AG04449 (cell line): ENCODE measurements at regions of chr7 and their contacts with region 1.

Region 1: DNA sequence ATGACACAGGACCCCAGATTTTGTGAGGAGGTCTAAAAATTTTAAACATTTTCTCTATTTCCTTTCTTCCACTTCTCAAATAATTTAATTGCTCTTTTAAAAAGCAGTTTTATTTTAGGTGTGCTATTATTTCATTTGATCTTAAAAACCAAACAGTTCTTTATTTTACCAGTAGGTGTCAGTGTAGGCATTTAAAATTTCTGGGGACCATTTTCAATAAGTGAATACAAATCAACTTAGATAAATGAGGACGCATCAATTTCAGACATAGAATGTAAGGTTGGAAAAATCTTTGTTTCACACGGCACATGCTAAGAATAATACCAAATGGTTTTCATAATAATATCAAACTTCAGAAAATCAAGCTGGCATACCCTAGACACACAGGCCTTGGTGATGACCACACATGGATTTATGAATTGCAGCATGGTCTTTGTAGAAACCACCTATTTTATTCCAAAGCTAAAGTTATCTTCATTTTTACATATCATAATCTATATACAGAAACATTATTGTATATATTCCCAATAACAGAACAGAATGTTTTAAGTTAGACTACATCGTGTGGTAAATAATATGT is 127.6 kb upstream of the SLC26A5 start:
- DNase-seq: no peak
- H3K4me3 ChIP-seq: no peak overlapping the region
- CTCF ChIP-seq: no peak

Region 2: DNA sequence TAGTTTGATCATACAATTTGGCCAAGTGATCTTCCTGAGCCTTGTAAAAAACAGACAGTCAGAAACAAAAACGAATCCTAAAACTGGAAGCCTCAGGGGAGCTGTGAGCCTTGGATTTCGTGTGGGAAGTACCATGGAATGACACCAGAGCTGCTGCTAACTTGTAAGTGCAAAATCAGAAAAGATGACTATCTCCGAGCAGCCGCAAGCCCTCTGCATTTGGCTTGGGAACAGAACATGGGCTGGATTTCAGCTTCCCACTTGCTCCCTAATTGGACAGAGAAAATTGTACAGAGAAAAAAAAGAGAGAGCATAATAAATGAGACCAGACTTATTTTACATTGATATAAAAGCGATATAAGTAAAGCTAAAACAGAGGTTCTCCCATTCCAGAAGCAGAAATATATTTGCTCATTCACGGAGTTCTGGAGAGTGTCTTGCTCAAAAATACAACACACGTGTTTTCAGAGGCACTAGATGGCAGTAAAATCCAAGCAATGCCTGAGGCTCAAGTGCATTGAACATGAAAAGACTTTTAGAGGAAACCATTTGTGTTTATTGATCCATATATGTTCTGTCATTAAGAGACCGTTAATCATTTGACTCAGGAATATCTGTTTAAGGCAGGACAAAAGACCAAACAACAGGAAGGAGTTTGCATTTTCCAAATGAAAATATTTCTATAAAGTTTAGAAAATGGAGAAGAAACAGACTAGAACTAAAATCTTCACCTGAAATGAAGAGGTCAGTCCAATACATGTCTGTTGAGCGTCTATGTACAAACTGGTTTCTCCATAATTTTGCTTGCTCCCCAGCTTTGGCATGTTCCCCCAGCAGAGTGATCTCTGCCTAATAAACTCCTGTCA is 49.3 kb before region 1 on chr7:
- CTCF ChIA-PET with region 1: interaction called, 23 read pairs
- POLR2A ChIA-PET with region 1: no interaction called
- DNase-seq: peak; percentile 9
- H3K4me3 ChIP-seq: no peak overlapping the region
- CTCF ChIP-seq: peak; percentile 52

Region 3: GRCh38 chr7:103593691-103594090 is 20.1 kb after region 1 on chr7:
- CTCF ChIA-PET with region 1: interaction called, 27 read pairs
- POLR2A ChIA-PET with region 1: no interaction called
- DNase-seq: peak; percentile 7
- H3K4me3 ChIP-seq: no peak overlapping the region
- CTCF ChIP-seq: no peak

Region 4: DNA sequence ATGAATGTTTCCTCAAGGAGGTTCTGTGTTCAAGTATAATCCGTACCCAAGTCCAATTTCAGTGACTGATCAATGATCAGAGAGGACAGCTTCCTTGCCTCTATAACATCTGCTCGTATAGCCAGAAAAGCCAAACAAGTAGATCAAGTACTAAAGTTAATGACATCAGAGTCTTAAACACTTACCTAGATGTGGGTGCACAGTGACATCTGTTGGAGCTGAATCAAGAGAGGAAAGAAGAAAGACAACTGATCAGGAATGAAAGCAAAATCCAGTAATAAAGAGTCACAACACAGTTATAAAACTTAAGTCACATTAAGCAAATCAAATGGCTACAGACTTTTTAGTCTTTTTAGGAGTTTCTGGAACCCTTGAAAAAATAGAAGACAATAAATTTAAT is 179.4 kb after region 1 on chr7:
- CTCF ChIA-PET with region 1: interaction called, 65 read pairs
- POLR2A ChIA-PET with region 1: no interaction called
- DNase-seq: no peak
- H3K4me3 ChIP-seq: no peak overlapping the region
- CTCF ChIP-seq: peak; percentile 11

Region 5: GRCh38 chr7:104156842-104157277 is 583.3 kb after region 1 on chr7:
- CTCF ChIA-PET with region 1: interaction called, 31 read pairs
- POLR2A ChIA-PET with region 1: no interaction called
- DNase-seq: peak; percentile 12
- H3K4me3 ChIP-seq: no peak overlapping the region
- CTCF ChIP-seq: peak; percentile 43

Region 6: GRCh38 chr7:104267701-104268368 is 694.3 kb after region 1 on chr7:
- CTCF ChIA-PET with region 1: interaction called, 10 read pairs
- POLR2A ChIA-PET with region 1: no interaction called
- DNase-seq: no peak
- H3K4me3 ChIP-seq: no peak overlapping the region
- CTCF ChIP-seq: peak; percentile 44